ENCODE measurements at regions of chr7 and their contacts with region 1.

Region 1: GRCh38 chr7:40507166-40507565 is 372.4 kb downstream of the SUGCT start:
- DNase-seq: no peak
- ATAC-seq: no peak
- H3K4me3 ChIP-seq: no peak overlapping the region
- H3K27ac ChIP-seq: no peak overlapping the region
- H3K4me1 ChIP-seq: peaks cover 0 to 9% of the 10 kb centered on the region in 2 donors
- H3K27me3 ChIP-seq: no peaks in the 10 kb centered on the region

Region 2: GRCh38 chr7:40463446-40463845 is 43.7 kb before region 1 on chr7:
- intact Hi-C with region 1: loop called in 1 of 2 experiments (anchors 5 kb)
- DNase-seq: peak in 1 of 2 donors; percentile 51
- ATAC-seq: no peak
- H3K4me3 ChIP-seq: peak overlapping the region in 1 of 2 donors; percentile 89
- H3K27ac ChIP-seq: peak overlapping the region; percentile 68 to 88
- H3K4me1 ChIP-seq: peaks cover 0 to 7% of the 10 kb centered on the region in 2 donors
- H3K27me3 ChIP-seq: no peaks in the 10 kb centered on the region

Region 3: GRCh38 chr7:40474790-40475680 is 32.1 kb before region 1 on chr7:
- intact Hi-C with region 1: loop called in 1 of 2 experiments (anchors 5 kb)
- DNase-seq: no peak
- ATAC-seq: no peak
- H3K4me3 ChIP-seq: no peak overlapping the region
- H3K27ac ChIP-seq: no peak overlapping the region
- H3K4me1 ChIP-seq: peaks cover 0 to 3% of the 10 kb centered on the region in 2 donors
- H3K27me3 ChIP-seq: no peaks in the 10 kb centered on the region

Measured in aorta (tissue), 5 donors.